ENCODE measurements at regions of chr3 and their contacts with region 1.

Region 1: GRCh38 chr3:177284383-177284881 is 87.2 kb upstream of the TBL1XR1 start:
- DNase-seq: no peak
- ATAC-seq: no peak
- H3K4me3 Mint-ChIP-seq: no peak overlapping the region
- H3K27ac Mint-ChIP-seq: no peak overlapping the region
- H3K4me1 Mint-ChIP-seq: peaks cover 23% of the 10 kb centered on the region
- H3K27me3 Mint-ChIP-seq: no peaks in the 10 kb centered on the region
- CTCF ChIP-seq: no peak

Region 2: GRCh38 chr3:177263615-177264368 is 20.6 kb before region 1 on chr3:
- CTCF ChIA-PET with region 1: no interaction called
- POLR2A ChIA-PET with region 1: no interaction called
- intact Hi-C with region 1: no loop called
- DNase-seq: no peak
- ATAC-seq: no peak
- H3K4me3 Mint-ChIP-seq: no peak overlapping the region
- H3K27ac Mint-ChIP-seq: peak overlapping the region; percentile 20
- H3K4me1 Mint-ChIP-seq: peaks cover 8% of the 10 kb centered on the region
- H3K27me3 Mint-ChIP-seq: no peaks in the 10 kb centered on the region
- CTCF ChIP-seq: no peak

Region 3: GRCh38 chr3:177300039-177300833 is 15.8 kb after region 1 on chr3:
- CTCF ChIA-PET with region 1: no interaction called
- POLR2A ChIA-PET with region 1: interaction called, 4 read pairs
- intact Hi-C with region 1: loop called (anchors 2 kb)
- DNase-seq: no peak
- ATAC-seq: peak; percentile 77
- H3K4me3 Mint-ChIP-seq: no peak overlapping the region
- H3K27ac Mint-ChIP-seq: peak overlapping the region; percentile 53
- H3K4me1 Mint-ChIP-seq: peaks cover 17% of the 10 kb centered on the region
- H3K27me3 Mint-ChIP-seq: no peaks in the 10 kb centered on the region
- CTCF ChIP-seq: no peak

Region 4: DNA sequence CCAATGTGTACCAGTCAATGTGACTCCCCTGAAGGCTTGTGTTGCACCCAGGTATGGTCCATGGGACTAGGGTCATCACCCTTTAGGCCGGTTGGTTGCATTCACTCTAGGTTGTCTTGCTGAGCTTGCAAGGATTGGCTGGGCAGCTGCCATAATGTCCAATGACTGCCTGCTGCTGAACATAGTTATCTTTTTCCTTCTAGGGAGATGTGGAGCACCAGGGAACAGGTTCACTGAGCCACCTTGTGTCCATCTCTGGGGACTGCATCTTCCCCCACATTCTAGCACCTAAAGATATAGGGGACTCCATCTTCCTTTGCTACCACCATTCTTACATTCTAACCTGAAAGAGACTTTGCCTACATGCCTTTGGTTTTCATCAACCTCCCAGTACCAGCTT is 493.3 kb after region 1 on chr3:
- CTCF ChIA-PET with region 1: no interaction called
- POLR2A ChIA-PET with region 1: no interaction called
- intact Hi-C with region 1: loop called (anchors 10 kb)
- DNase-seq: no peak
- ATAC-seq: peak; percentile 75
- H3K4me3 Mint-ChIP-seq: no peak overlapping the region
- H3K27ac Mint-ChIP-seq: no peak overlapping the region
- H3K4me1 Mint-ChIP-seq: peaks cover 18% of the 10 kb centered on the region
- H3K27me3 Mint-ChIP-seq: no peaks in the 10 kb centered on the region
- CTCF ChIP-seq: no peak